ENCODE measurements at regions of chr10 and their contacts with region 1.

Region 1: GRCh38 chr10:15097011-15097812 is at the start of gene RPP38:
- DNase-seq: peak; percentile 97 to 98
- ATAC-seq: peak; percentile 97 to 99 (median 98)
- H3K4me3 ChIP-seq: peak within 1 kb of the TSS; percentile 66 to 99 (median 87)
- H3K27ac ChIP-seq: peak within 1 kb of the TSS; percentile 90 to 99 (median 95)
- H3K4me1 ChIP-seq: peaks cover 5 to 33% (median 26%) of the 10 kb centered on the region in 9 donors
- H3K27me3 ChIP-seq: no peaks in the 10 kb centered on the region
- CTCF ChIP-seq: no peak
- total RNA-seq, gene RPP38: 3.9 to 11.0 (median 6.7) TPM

Region 2: GRCh38 chr10:14536241-14537213 is 560.7 kb before region 1 on chr10:
- intact Hi-C with region 1: loop called in 2 of 10 experiments (anchors 10 kb)
- DNase-seq: peak; percentile 69 to 82
- ATAC-seq: peak; percentile 72 to 91 (median 88)
- H3K4me3 ChIP-seq: no peak overlapping the region
- H3K27ac ChIP-seq: peak overlapping the region in 2 of 10 donors; percentile 41 to 50
- H3K4me1 ChIP-seq: peaks cover 0 to 21% (median 7%) of the 10 kb centered on the region in 9 donors
- H3K27me3 ChIP-seq: no peaks in the 10 kb centered on the region
- CTCF ChIP-seq: peak; percentile 31 to 78 (median 70)

Region 3: GRCh38 chr10:14837757-14838581 is 259.2 kb before region 1 on chr10 and contains the starts of genes CDNF, HSPA14 and MSANTD7:
- intact Hi-C with region 1: loop called in 1 of 10 experiments (anchors 10 kb)
- DNase-seq: peak; percentile 99 to 100
- ATAC-seq: peak; percentile 98 to 100 (median 99)
- H3K4me3 ChIP-seq: peak within 1 kb of the TSS; percentile 80 to 99 (median 92)
- H3K27ac ChIP-seq: peak within 1 kb of the TSS; percentile 90 to 99 (median 96)
- H3K4me1 ChIP-seq: peaks cover 0 to 28% (median 24%) of the 10 kb centered on the region in 9 donors
- H3K27me3 ChIP-seq: no peaks in the 10 kb centered on the region
- CTCF ChIP-seq: peak in 1 of 9 donors; percentile 7
- total RNA-seq, gene CDNF: 2.5 to 6.3 (median 4.3) TPM
- total RNA-seq, gene HSPA14: 7.1 to 9.7 (median 8.2) TPM
- total RNA-seq, gene MSANTD7: 3.8 to 6.1 (median 5.6) TPM

Region 4: GRCh38 chr10:14878266-14879054 is 218.8 kb before region 1 on chr10 and contains the start of gene SUV39H2:
- intact Hi-C with region 1: loop called in 2 of 10 experiments (anchors 5 to 10 kb)
- DNase-seq: peak; percentile 94 to 97
- ATAC-seq: peak; percentile 94 to 99 (median 96)
- H3K4me3 ChIP-seq: peak within 1 kb of the TSS; percentile 68 to 96 (median 85)
- H3K27ac ChIP-seq: peak within 1 kb of the TSS; percentile 82 to 99 (median 96)
- H3K4me1 ChIP-seq: peaks cover 0 to 45% (median 30%) of the 10 kb centered on the region in 9 donors
- H3K27me3 ChIP-seq: no peaks in the 10 kb centered on the region
- CTCF ChIP-seq: peak in 3 of 9 donors; percentile 20 to 40 (median 37)
- total RNA-seq, gene SUV39H2: 4.3 to 9.1 (median 7.4) TPM

Region 5: GRCh38 chr10:14954001-14954770 is 143.0 kb before region 1 on chr10 and contains the start of gene DCLRE1C:
- intact Hi-C with region 1: loop called in 8 of 10 experiments (anchors 2 to 10 kb)
- DNase-seq: peak; percentile 89 to 90
- ATAC-seq: peak; percentile 98 to 99 (median 99)
- H3K4me3 ChIP-seq: peak within 1 kb of the TSS; percentile 73 to 97 (median 78)
- H3K27ac ChIP-seq: peak within 1 kb of the TSS; percentile 27 to 95 (median 88)
- H3K4me1 ChIP-seq: peaks cover 0 to 40% (median 18%) of the 10 kb centered on the region in 9 donors
- H3K27me3 ChIP-seq: no peaks in the 10 kb centered on the region
- CTCF ChIP-seq: no peak
- total RNA-seq, gene DCLRE1C: 1.6 to 4.2 (median 3.8) TPM

Region 6: DNA sequence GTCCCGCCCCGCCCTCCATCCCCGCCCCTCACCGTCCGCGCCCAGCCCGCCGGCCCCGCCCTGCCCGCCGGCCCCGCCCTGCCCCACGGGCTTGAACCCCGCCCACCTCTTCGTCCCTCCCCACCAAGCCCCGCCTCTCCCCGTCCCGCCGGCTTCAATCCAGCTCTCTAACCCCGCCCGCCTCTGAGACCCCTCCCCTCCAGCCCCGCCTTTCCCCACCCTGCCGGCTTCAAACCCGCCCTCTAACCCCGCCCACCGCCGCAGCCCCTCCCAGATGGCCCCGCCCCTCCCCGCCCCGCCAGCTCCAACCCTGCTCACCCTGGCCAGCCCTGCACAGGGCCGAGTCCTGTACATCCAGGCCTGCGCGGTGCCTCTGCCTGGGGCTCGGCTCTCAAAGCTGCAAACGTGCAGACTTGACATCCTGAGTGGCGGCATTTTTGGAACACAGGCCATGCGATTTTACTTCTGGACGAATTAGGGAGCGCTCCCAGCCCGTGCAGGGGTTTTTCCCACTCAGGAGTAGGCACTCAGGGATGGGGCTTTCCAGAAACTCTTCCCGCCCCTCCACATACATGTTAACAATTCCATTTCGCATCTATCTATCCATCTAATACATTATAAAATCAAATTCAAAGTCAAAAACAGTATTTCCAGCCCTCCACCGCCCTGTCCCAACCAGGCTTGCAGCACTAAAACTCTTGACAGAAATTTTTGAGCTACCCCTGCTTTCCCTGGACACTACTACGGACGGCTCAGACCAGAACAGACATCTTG is 71.8 kb after region 1 on chr10:
- intact Hi-C with region 1: loop called in 2 of 10 experiments (anchors 5 to 10 kb)
- DNase-seq: peak; percentile 97 to 98
- ATAC-seq: peak; percentile 87 to 94 (median 93)
- H3K4me3 ChIP-seq: peak overlapping the region in 6 of 10 donors; percentile 22 to 46 (median 35)
- H3K27ac ChIP-seq: peak overlapping the region in 9 of 10 donors; percentile 14 to 82 (median 65)
- H3K4me1 ChIP-seq: peaks cover 7 to 40% (median 34%) of the 10 kb centered on the region in 9 donors
- H3K27me3 ChIP-seq: peaks cover 0 to 15% (median 0%) of the 10 kb centered on the region in 7 donors
- CTCF ChIP-seq: no peak

Measured in heart right ventricle (tissue), 16 donors.